ENCODE measurements at regions of chr19 and their contacts with region 1.

Region 1: GRCh38 chr19:55146078-55146704 is 2.8 kb downstream of the TNNT1 start:
- DNase-seq: peak; percentile 67
- H3K4me3 Mint-ChIP-seq: peak overlapping the region; percentile 63
- H3K27ac Mint-ChIP-seq: no peak overlapping the region
- H3K4me1 Mint-ChIP-seq: peaks cover 24% of the 10 kb centered on the region
- H3K27me3 Mint-ChIP-seq: peaks cover 63% of the 10 kb centered on the region
- CTCF ChIP-seq: peak; percentile 92

Region 2: DNA sequence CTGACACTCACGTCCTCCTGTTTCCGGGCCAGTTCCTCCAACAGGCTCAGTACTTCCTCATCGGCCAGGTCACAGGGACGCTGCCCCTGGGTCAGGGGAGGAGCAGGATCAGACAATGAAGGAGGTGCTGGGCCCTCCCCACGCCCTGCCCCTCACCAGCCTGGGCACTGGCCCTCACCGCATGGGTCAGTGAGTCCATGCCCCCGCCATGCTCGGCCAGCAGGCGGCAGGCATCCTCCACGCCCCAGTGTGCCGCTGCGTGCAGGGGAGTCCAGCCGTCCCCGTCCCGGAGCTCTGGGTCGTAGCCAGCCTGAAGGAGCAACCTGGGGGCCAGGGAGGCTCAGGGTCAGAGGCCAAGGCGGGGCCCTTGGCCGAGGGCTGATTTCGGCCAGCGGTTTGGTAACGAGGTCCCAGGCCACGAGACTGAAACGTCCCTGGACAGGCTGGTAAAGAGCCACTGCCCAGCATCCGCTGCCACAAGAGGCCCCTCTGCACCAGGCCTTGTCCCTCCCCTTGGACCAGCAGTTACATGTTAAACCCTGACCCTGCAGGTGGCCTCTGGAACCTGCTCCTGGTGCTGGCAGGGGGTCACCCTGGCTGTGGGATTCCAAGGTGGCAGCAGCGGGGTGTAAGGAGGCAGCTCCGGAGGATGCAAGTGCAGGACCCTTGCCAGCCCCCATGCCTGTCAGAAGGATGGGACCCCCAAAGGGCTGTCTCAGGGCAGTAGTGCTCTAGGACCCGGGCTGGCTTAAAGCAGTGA is 47.2 kb before region 1 on chr19:
- CTCF ChIA-PET with region 1: no interaction called
- intact Hi-C with region 1: no loop called
- DNase-seq: no peak
- H3K4me3 Mint-ChIP-seq: no peak overlapping the region
- H3K27ac Mint-ChIP-seq: no peak overlapping the region
- H3K4me1 Mint-ChIP-seq: no peaks in the 10 kb centered on the region
- H3K27me3 Mint-ChIP-seq: no peaks in the 10 kb centered on the region
- CTCF ChIP-seq: no peak

Region 3: DNA sequence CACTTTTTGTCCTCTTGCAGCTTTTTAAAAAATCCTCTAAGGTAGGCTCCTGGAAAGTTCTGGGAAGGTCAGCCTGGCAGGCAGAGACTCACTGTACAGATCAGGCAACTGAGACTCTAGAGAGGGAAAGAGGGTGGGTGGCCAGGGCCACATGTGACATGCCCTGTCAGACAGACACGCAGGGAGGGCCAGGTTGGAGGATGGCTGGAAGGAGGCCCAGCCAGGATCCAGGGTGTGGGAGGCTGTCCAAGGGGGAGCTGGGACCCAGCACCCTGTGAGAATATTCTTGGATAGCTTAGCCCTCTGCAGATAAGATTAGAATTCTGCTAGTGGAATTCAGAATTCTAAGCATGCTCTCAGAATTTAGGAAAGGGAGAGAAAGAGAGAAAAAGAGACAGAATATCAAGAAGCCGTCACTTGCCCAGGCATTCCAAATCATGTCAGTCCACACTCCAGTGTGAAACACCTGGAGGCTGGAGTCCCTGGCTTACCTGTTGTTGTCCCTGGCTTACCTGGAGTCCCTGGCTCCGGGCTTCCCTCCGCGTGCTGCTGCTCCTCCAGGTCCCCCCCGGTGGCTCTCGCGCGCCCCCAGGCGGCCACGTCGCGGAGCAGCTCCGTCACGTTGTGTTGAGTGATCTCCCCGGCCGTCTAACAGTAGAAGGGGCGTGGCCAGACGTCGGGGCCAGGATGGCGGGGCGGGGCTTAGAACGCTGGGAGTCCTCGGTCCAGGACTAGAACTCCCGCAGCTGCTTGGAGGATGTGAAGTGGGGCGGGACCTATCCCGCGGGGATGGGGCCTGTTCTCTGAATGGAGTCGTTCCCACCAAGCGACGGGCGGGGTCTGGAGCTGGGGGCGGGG is 14.2 kb after region 1 on chr19:
- CTCF ChIA-PET with region 1: interaction called, 14 read pairs
- intact Hi-C with region 1: no loop called
- DNase-seq: peak; percentile 98
- H3K4me3 Mint-ChIP-seq: no peak overlapping the region
- H3K27ac Mint-ChIP-seq: no peak overlapping the region
- H3K4me1 Mint-ChIP-seq: peaks cover 24% of the 10 kb centered on the region
- H3K27me3 Mint-ChIP-seq: peaks cover 29% of the 10 kb centered on the region
- CTCF ChIP-seq: peak; percentile 96

Region 4: DNA sequence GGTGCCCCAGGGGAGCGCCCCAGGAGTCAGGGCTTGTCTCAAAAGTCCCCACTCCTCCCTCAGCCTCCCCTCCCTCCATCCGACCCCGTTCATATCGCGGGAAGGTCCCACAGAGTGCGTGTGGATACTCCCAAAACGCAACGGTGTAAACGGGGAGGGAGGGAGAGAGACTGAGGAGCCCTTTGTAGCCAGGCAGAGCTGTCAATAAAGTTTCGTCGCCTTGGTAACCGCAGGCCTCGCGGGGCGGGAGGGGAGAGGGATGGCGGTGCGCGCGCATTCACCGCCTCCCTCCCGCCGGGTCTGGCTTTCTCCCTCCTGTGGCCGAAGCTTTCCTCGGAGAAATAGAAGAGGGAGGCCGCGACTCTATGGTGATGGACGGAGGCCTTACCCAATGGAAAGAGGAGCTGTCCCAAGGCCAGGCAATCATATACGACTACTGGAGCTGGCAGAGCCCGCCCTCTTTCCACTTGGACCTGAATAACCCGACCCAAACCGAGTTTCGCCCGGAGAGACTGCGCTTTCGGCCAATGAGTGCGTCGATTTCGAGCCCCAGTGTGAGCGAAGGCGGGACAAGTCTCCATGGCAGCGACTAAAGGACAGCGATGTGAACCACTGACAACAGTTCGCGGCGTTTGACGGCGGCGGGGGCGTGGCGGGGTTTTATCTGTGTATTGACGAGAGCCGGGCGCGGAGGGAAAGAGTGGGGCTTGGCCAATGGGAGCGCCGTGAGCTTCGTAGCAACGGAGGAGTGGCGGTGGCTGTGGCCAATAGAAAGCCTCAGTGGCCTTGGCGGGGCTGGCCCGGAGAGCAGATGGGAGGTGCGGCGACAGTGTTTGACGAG is 193.1 kb after region 1 on chr19 and contains the start of gene KMT5C:
- CTCF ChIA-PET with region 1: interaction called, 11 read pairs
- intact Hi-C with region 1: no loop called
- DNase-seq: peak; percentile 100
- H3K4me3 Mint-ChIP-seq: peak within 1 kb of the TSS; percentile 91
- H3K27ac Mint-ChIP-seq: peak within 1 kb of the TSS; percentile 97
- H3K4me1 Mint-ChIP-seq: peaks cover 20% of the 10 kb centered on the region
- H3K27me3 Mint-ChIP-seq: no peaks in the 10 kb centered on the region
- CTCF ChIP-seq: no peak
- total RNA-seq, gene KMT5C: 16.1 and 23.5 TPM in 2 replicates

Region 5: DNA sequence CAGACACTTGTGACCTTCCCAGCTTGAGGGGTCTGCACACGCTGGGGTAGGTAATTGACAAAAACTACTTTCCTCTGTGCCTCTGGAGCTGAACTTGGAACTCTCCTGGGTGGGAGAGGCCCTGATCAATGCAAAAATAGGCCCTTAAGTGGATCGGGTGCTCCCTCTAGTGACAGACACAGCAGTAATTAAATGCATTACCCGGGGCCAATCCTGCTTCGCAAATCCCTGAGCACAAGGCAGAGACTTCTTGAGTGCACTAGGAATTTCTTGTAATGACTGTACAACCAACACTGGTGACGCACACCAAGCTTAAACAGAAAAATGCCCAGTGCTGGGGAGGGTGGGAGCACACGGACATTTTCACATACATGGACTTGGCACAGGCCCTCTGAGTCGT is 272.0 kb after region 1 on chr19:
- CTCF ChIA-PET with region 1: interaction called, 12 read pairs
- intact Hi-C with region 1: loop called (anchors 1 kb)
- DNase-seq: peak; percentile 80
- H3K4me3 Mint-ChIP-seq: no peak overlapping the region
- H3K27ac Mint-ChIP-seq: no peak overlapping the region
- H3K4me1 Mint-ChIP-seq: peaks cover 9% of the 10 kb centered on the region
- H3K27me3 Mint-ChIP-seq: peaks cover 74% of the 10 kb centered on the region
- CTCF ChIP-seq: peak; percentile 87

Region 6: DNA sequence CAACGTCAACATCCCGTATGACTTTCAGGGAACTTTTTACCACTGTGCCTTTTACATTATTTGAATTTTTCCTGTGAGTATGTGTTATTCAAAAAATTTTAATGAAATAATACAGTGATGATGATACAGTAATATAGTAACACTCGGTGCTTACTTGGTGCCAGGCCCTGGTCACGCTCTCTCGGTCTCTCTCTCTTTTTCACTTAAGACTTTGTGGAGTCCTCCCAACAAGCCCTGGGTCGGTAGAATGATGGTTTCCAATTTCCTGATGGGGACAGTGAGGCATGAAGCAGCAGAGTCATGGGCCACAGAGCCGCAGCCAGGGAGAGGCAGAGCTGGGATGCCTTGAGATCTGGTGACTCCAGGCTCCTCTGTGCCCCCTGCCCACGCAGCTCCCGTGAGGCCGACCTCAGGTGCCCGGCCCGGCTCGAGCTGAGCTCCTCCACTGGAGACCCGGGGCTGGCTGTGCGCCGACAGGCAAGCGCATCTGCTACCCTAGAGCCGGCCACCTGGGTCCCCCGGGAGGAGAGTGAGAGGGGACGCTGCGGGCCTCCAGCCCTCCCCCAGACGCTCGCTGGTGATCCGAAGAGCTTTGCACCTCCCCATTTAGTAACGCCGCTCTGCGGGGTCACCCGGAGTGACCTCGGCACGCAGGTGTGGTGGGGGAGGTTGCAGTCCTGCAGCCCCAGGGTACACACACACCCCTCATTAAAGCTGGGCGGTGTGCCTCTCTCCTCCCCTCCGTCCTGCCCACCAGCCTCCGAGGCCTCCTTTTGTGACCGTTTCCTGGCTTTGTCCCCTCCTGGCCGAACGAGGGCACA is 403.5 kb after region 1 on chr19:
- CTCF ChIA-PET with region 1: no interaction called
- intact Hi-C with region 1: loop called (anchors 5 kb)
- DNase-seq: peak; percentile 56
- H3K4me3 Mint-ChIP-seq: peak overlapping the region; percentile 65
- H3K27ac Mint-ChIP-seq: peak overlapping the region; percentile 94
- H3K4me1 Mint-ChIP-seq: peaks cover 69% of the 10 kb centered on the region
- H3K27me3 Mint-ChIP-seq: peaks cover 13% of the 10 kb centered on the region
- CTCF ChIP-seq: no peak

Measured in Calu3 (cell line).